ENCODE measurements at regions of chr17 and their contacts with region 1.

Region 1: DNA sequence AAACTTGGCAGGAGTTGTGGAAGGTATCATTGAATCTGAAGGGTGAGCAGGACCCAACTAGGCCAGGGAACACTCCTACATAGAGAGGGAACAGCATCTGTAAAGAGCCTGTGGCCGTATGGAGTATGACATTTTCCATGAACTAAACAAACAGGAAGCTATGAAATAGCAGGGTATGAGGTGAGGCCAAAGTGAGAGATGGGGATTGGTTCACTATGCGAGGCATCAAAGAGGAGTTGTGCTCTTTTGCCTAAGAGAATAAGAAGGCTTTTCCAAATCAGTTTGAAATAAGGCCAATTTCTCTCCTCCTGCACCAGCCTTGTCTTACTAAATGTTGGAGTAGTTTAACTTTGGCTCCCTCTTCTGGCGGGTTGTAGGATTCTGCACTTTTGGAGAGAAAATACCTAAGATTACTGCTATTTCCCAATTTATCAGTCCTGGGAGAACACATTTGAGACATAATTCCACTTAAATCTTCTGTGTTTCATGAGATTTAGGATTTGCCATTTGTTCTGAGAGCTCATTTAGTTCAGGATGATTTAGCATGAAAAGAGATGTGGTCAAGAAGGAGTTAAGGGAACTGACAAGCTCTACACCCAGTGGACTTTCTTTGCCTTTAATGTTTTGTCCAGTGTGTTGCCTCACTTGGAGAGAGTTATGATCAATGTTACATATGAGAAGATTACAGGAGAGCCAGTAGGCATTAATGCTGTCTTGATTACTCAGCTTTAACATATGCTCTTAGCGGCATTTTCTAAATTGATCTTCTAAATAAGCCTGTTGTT is 55.4 kb downstream of the TNRC6C start:
- DNase-seq: peak; percentile 79
- H3K4me3 ChIP-seq: no peak overlapping the region
- H3K27ac ChIP-seq: no peak overlapping the region
- H3K4me1 ChIP-seq: no peaks in the 10 kb centered on the region
- CTCF ChIP-seq: peak; percentile 100

Region 2: GRCh38 chr17:77772461-77772897 is 241.4 kb before region 1 on chr17:
- CTCF ChIA-PET with region 1: interaction called, 3 read pairs
- POLR2A ChIA-PET with region 1: no interaction called
- intact Hi-C with region 1: loop called (anchors 1 kb)
- DNase-seq: peak; percentile 73
- H3K4me3 ChIP-seq: no peak overlapping the region
- H3K27ac ChIP-seq: no peak overlapping the region
- H3K4me1 ChIP-seq: no peaks in the 10 kb centered on the region
- CTCF ChIP-seq: peak; percentile 97

Region 3: DNA sequence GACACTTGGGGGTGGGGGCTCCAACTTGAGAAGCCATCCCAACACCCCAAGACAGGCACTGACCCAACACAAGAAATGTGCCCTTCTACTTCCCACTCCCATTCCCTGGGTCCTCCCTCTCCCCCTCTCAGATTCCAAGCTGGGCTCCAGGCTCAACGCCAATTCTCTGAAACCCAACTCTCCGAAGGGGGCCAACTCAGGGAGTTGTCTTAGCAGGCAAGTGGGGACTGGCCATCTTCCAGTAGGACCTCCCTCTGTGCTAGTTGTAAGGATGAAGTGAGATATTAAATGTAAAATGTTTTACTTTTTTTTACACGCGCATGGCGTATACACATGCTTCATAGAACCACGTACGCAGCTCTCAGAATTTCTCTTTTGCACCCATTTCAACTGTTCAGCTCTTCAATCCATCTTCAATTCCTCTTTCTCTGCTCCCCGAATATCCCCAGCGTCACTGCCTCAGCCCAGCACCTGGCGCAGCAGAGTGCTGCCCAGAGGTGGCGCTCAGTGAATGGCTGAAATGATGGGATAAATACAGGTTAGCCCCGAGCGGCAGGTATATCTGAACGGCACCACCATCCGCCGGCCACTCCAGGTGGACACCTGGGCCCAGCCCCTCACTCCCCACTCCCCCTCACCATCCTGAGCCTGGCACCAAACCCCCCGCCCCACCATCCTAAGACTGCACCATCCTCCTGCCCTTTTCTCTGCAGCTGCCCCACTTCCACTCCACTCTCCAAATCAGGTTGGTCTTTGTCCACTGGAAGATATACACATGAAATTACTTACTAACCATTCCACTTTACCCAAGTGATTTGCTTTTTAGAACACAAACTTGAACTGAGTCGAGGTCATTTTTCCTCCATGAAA is 99.3 kb before region 1 on chr17:
- CTCF ChIA-PET with region 1: no interaction called
- POLR2A ChIA-PET with region 1: no interaction called
- intact Hi-C with region 1: loop called (anchors 5 kb)
- DNase-seq: peak; percentile 29
- H3K4me3 ChIP-seq: no peak overlapping the region
- H3K27ac ChIP-seq: no peak overlapping the region
- H3K4me1 ChIP-seq: peaks cover 6% of the 10 kb centered on the region
- CTCF ChIP-seq: peak; percentile 71

Region 4: GRCh38 chr17:77965352-77965751 is 48.5 kb before region 1 on chr17:
- CTCF ChIA-PET with region 1: no interaction called
- POLR2A ChIA-PET with region 1: no interaction called
- intact Hi-C with region 1: no loop called
- DNase-seq: no peak
- H3K4me3 ChIP-seq: no peak overlapping the region
- H3K27ac ChIP-seq: no peak overlapping the region
- H3K4me1 ChIP-seq: peaks cover 13% of the 10 kb centered on the region
- CTCF ChIP-seq: no peak

Measured in OCI-LY7 (cell line).